Ovary (tissue), 10 donors: ENCODE measurements at regions of chr11 and their contacts with region 1.

Region 1: GRCh38 chr11:7321473-7322450 is 70.1 kb downstream of the SYT9 start:
- DNase-seq: no peak
- H3K4me3 ChIP-seq: no peak overlapping the region
- H3K27ac ChIP-seq: no peak overlapping the region
- H3K4me1 ChIP-seq: no peaks in the 10 kb centered on the region
- H3K27me3 ChIP-seq: no peaks in the 10 kb centered on the region
- CTCF ChIP-seq: no peak
- EP300 ChIP-seq: no peak
- POLR2A ChIP-seq: no peak

Region 2: DNA sequence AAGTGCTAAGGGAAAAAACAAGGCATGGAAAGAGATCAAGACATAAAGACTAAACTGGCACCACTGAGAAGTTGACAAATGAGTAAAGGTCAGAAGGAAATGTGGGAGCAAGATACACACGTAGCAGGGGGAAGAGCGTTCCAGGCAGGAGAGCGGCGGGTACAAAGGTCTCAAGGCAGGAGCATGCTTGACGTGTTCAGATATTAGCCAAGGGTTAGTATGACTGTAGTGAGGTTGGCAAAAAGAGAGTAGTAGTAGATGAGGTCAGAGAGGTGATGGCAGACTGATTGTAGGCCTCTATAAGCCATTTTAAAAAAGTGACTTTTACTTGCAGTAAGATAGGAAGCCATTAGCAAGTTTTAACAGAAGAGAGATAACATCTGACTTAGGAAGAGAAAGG is 60.2 kb before region 1 on chr11:
- intact Hi-C with region 1: loop called in 1 of 4 experiments (anchors 10 kb)
- DNase-seq: no peak
- H3K4me3 ChIP-seq: no peak overlapping the region
- H3K27ac ChIP-seq: no peak overlapping the region
- H3K4me1 ChIP-seq: no peaks in the 10 kb centered on the region
- H3K27me3 ChIP-seq: no peaks in the 10 kb centered on the region
- CTCF ChIP-seq: no peak
- EP300 ChIP-seq: no peak
- POLR2A ChIP-seq: no peak

Region 3: GRCh38 chr11:7364660-7365059 is 42.9 kb after region 1 on chr11:
- intact Hi-C with region 1: loop called in 1 of 4 experiments (anchors 1 kb)
- DNase-seq: no peak
- H3K4me3 ChIP-seq: no peak overlapping the region
- H3K27ac ChIP-seq: no peak overlapping the region
- H3K4me1 ChIP-seq: no peaks in the 10 kb centered on the region
- H3K27me3 ChIP-seq: no peaks in the 10 kb centered on the region
- CTCF ChIP-seq: no peak
- EP300 ChIP-seq: no peak
- POLR2A ChIP-seq: no peak

Region 4: DNA sequence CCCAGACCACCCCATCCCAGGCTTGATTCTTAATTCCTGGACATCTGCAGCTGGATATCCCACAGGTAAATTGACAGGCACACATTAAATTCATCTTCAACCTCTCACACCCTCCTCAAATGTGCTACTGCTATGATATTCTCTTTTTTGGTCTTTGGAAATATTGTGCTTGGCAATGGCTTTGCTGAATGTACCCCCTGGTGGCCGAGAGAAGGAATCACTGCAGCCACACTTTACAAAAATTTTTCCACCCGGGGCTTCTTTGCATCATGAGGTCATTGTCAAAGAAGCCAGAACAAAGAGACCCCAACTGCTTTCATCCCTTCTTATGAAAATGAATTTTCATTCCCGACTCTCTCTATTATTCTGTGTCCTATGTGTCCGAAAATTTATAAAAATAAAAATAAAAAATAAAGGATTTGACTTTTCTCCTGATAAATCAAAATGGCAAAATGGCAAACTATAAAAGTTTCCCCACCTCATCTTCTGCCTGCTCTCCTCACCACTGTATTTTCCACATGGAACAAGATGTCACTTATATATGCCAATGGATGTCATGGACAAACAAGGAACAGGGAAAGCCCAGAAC is 366.6 kb after region 1 on chr11:
- intact Hi-C with region 1: no loop called
- DNase-seq: peak in 1 of 5 donors; percentile 25
- H3K4me3 ChIP-seq: no peak overlapping the region
- H3K27ac ChIP-seq: no peak overlapping the region
- H3K4me1 ChIP-seq: no peaks in the 10 kb centered on the region
- H3K27me3 ChIP-seq: no peaks in the 10 kb centered on the region
- CTCF ChIP-seq: peak in 2 of 3 donors; percentile 48 to 73
- EP300 ChIP-seq: no peak
- POLR2A ChIP-seq: no peak